Dorsolateral prefrontal cortex (tissue), 120 donors: ENCODE measurements at regions of chr4 and their contacts with region 1.

Region 1: DNA sequence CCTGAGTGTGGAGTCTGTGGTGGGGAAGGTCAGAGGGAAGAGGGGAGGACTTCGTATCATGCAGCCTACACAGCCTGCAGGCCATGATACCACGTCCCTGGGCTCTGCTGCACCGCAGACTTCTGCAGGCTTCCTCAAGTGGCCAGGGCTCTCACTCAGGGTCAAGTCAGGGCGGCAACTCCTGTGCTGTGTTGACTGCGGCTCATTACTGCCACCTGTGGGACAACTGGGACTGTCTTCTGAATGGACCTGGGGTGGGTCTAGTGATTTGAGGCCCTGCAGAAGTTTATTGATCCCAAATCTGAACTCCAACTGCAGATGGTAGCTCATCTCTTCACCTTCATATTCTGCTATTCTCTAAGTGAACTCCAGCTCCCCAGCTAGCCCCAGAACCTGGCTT is 167.1 kb downstream of the NSUN7 start:
- DNase-seq: peak in 4 of 10 donors; percentile 19 to 46 (median 38)
- H3K4me3 ChIP-seq: no peak overlapping the region
- H3K27ac ChIP-seq: peak overlapping the region in 2 of 59 donors; percentile 8 to 15
- H3K27me3 ChIP-seq: no peaks in the 10 kb centered on the region
- CTCF ChIP-seq: peak in 49 of 56 donors; percentile 11 to 61 (median 43)

Region 2: GRCh38 chr4:40865696-40866095 is 51.2 kb before region 1 on chr4:
- intact Hi-C with region 1: no loop called
- DNase-seq: no peak
- H3K4me3 ChIP-seq: no peak overlapping the region
- H3K27ac ChIP-seq: no peak overlapping the region
- H3K27me3 ChIP-seq: no peaks in the 10 kb centered on the region
- CTCF ChIP-seq: no peak

Region 3: GRCh38 chr4:40992472-40993295 is 75.8 kb after region 1 on chr4:
- intact Hi-C with region 1: no loop called
- DNase-seq: no peak
- H3K4me3 ChIP-seq: no peak overlapping the region
- H3K27ac ChIP-seq: peak overlapping the region in 20 of 59 donors; percentile 1 to 64 (median 22)
- H3K27me3 ChIP-seq: no peaks in the 10 kb centered on the region
- CTCF ChIP-seq: no peak

Region 4: DNA sequence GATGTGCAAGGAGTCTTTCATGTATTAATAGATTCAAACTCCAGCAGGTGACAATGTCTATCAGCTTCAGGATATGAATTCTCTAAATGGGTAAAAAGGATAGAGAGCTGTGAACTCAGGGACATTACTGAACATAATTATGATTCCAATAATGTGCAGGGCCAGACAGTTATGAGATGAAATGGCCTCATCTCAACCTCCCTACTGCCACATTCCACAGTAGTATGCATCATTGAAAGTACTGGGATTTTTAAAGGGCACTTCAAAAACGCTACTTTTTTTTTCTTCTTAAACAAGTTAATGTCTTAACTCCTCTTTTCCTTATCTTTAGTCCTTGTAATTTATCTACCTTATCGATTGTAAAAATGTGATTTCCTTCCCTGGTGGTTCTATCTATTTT is 95.4 kb after region 1 on chr4:
- intact Hi-C with region 1: no loop called
- DNase-seq: no peak
- H3K4me3 ChIP-seq: no peak overlapping the region
- H3K27ac ChIP-seq: no peak overlapping the region
- H3K27me3 ChIP-seq: no peaks in the 10 kb centered on the region
- CTCF ChIP-seq: no peak

Region 5: DNA sequence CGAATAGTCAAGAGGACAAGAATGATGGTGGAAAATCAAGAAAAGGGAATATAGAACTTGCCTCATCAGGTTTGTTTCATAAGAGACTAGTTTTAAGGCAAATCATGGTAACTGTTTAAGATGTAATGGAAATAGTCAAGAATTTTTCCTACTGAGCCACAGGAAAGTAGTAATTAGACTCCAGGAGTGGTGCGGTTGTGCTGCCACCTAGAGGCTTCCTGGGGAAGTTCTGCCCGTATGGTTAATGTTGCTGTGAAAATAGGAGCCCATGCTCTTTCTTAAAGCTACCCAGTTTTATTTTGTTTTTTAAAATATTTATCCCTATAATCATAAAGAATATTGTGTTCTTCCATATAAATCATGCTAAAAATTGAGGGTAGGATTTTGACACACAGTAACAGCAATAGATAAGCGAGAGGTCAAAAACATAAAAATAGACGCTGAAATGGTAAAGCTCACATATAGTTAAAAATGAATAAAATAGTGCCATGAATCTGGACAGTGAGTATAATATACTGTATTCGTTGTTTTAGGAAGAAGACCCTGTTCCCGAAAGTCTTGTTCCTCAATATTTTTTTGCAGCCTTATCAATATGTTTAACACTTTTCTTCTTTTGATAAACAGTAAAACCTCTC is 744.7 kb after region 1 on chr4:
- intact Hi-C with region 1: loop called in 1 of 2 experiments (anchors 10 kb)
- DNase-seq: peak; percentile 54 to 85 (median 65)
- H3K4me3 ChIP-seq: no peak overlapping the region
- H3K27ac ChIP-seq: peak overlapping the region in 15 of 59 donors; percentile 5 to 62 (median 26)
- H3K27me3 ChIP-seq: no peaks in the 10 kb centered on the region
- CTCF ChIP-seq: peak; percentile 87 to 99 (median 95)

Region 6: DNA sequence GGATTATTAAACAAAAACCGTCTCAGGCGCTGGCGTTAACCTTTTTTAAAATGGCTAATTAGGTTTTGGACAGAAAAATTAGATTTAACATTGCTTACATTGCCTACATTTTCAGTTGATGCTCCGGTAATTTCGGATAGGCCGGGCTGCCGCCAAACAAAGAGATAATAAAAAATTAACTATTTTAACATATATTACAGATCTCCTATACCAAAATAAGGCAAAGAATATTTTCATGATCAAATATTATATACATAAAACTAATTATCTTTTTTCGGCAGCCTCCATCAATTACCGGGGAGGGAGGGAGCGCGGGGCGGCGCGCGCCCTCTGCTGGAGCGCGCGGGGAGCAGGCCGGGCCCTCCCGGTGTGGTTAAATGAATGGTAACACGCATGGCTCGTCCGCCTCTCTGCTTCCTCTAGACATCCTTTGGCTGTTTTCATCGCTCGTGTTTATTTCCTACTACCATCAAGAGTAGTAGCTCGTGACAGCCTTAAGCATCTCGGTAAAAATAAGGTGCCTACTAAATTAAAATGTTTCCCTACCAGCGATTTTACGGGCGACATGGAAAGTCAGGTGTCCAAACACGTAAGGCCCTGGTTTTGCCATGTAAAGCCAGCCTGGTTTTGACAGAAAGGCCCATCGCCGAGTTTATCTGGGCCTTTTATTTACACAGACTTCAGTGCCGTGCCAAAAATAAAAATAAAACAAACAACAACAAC is 965.9 kb after region 1 on chr4:
- intact Hi-C with region 1: loop called in 1 of 2 experiments (anchors 10 kb)
- DNase-seq: peak in 2 of 10 donors; percentile 38 to 49
- H3K4me3 ChIP-seq: peak overlapping the region in 58 of 59 donors; percentile 19 to 68 (median 50)
- H3K27ac ChIP-seq: no peak overlapping the region
- H3K27me3 ChIP-seq: peaks cover 17 to 75% (median 54%) of the 10 kb centered on the region in 45 donors
- CTCF ChIP-seq: peak; percentile 54 to 92 (median 80)